ENCODE measurements at regions of chr17 and their contacts with region 1.

Region 1: DNA sequence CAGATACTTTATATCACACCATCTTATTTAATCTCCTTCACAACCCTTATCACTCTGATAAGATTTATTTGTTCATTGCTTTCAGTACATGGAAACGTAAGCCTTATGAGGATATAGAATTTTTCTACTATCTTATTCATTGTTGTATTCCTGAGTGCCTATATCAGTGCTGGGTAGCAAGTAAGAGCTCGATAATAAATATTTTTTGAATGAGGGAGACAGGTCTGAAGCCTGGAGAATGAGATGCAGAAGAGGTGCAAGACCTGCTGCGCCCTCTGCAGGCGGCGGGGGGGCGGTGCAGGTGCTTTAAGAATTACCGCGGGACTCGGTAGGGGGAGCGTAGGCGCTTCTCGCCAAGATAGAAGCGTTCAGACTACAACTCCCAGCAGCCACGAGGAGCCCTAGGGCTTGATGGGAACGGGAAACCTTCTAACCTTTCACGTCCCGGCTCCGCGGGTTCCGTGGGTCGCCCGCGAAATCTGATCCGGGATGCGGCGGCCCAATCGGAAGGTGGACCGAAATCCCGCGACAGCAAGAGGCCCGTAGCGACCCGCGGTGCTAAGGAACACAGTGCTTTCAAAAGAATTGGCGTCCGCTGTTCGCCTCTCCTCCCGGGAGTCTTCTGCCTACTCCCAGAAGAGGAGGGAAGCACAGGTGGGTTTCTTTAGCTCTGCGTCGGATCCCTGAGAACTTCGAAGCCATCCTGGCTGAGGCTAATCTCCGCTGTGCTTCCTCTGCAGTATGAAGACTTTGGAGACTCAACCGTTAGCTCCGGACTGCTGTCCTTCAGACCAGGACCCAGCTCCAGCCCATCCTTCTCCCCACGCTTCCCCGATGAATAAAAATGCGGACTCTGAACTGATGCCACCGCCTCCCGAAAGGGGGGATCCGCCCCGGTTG is at the start of gene WRAP53:
- DNase-seq: peak; percentile 92 to 98 (median 95)
- ATAC-seq: peak; percentile 79
- H3K4me3 Mint-ChIP-seq: peak within 1 kb of the TSS; percentile 87 to 99 (median 98)
- H3K27ac Mint-ChIP-seq: peak within 1 kb of the TSS; percentile 99 to 100 (median 100)
- H3K4me1 Mint-ChIP-seq: peaks cover 25 to 51% (median 50%) of the 10 kb centered on the region in 4 donors
- H3K27me3 Mint-ChIP-seq: peaks cover 0 to 3% (median 0%) of the 10 kb centered on the region in 5 donors
- polyA plus RNA-seq, gene WRAP53: 10.5 to 14.1 (median 13.9) TPM

Region 2: DNA sequence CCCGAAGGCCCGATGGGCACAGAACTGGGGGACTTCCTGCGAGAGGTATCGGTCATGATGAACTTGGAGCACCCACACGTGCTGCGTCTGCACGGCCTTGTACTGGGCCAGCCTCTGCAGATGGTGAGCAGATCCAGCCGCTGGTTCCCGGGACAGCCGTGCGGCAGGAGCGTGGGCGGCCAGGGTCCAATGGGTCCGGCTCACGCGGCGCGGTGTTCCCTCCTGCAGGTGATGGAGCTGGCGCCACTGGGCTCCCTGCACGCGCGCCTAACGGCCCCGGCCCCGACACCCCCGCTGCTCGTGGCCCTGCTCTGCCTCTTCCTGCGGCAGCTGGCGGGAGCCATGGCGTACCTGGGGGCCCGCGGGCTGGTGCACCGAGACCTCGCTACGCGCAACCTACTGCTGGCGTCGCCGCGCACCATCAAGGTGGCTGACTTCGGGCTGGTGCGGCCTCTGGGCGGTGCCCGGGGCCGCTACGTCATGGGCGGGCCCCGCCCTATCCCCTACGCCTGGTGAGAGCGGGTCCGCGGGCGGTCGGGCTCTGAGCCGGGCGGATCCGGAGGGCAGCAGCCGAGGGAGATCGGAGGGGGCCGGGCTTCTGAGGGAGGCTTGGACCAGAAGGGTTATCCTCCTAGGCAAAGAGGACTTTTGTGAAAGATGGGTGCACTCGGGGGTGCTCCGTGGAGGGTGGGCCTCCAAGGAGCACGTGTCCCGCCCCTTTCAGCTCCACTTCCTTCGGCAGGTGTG is 304.2 kb before region 1 on chr17:
- POLR2A ChIA-PET with region 1: interaction called, 15 read pairs
- DNase-seq: peak; percentile 65 to 93 (median 82)
- ATAC-seq: peak; percentile 95
- H3K4me3 Mint-ChIP-seq: peak overlapping the region; percentile 77 to 94 (median 86)
- H3K27ac Mint-ChIP-seq: peak overlapping the region; percentile 48 to 97 (median 96)
- H3K4me1 Mint-ChIP-seq: peaks cover 15 to 42% (median 24%) of the 10 kb centered on the region in 4 donors
- H3K27me3 Mint-ChIP-seq: peaks cover 14 to 33% (median 29%) of the 10 kb centered on the region in 5 donors

Region 3: GRCh38 chr17:7548585-7549400 is 139.4 kb before region 1 on chr17 and contains the start of gene TNFSF12:
- POLR2A ChIA-PET with region 1: interaction called, 21 read pairs
- DNase-seq: peak in 8 of 10 donors; percentile 34 to 79 (median 52)
- ATAC-seq: peak; percentile 33 to 71
- H3K4me3 Mint-ChIP-seq: peak within 1 kb of the TSS; percentile 72 to 92 (median 88)
- H3K27ac Mint-ChIP-seq: peak within 1 kb of the TSS; percentile 66 to 96 (median 94)
- H3K4me1 Mint-ChIP-seq: peaks cover 28 to 57% (median 54%) of the 10 kb centered on the region in 4 donors
- H3K27me3 Mint-ChIP-seq: no peaks in the 10 kb centered on the region
- polyA plus RNA-seq, gene TNFSF12: 19.3 to 28.6 (median 25.8) TPM

Region 4: DNA sequence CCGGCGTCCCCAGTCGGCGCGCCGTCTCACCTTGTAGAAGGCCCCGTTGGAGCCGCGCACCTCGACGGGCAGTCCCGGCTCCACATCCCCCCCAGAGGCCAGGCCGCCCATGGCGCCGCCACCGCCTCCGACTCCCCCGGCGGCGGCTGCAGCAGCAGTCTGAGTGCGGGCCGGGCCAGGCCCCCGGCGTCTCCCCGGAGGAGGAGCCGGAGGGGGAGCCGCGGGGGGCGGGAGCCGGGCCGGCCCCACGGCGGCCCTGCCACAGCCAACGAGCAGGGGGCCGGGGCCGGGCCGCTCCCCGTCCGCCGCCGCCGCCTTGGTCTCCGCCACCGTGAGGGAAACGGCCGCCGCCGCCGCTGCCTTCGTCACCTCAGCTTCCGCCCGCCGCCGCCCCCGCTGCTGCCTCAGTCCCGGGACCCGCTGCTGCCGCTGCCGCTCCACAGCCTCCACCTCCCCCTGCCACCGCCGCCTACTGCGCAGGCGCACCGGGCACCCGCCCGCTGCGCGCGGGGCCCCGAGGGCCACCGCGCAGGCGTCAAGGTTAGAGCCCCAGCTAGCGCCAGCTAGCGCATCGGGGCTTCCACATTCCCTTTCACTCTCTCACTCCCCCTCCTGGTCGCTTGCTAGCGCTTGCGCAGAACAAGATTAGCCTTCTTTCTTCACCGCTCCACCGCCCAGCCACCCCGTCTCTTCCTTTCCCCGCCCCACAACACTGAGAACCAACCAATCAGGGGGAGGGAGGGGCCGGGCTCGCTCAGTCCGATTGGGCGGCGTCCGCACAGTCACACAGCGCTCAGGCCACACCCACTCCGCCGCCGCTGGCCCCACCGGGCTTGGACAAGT is 73.5 kb before region 1 on chr17 and contains the start of gene FXR2:
- POLR2A ChIA-PET with region 1: interaction called, 105 read pairs
- DNase-seq: peak; percentile 96 to 100 (median 98)
- ATAC-seq: peak; percentile 83 to 85
- H3K4me3 Mint-ChIP-seq: peak within 1 kb of the TSS; percentile 85 to 97 (median 92)
- H3K27ac Mint-ChIP-seq: peak within 1 kb of the TSS; percentile 82 to 99 (median 97)
- H3K4me1 Mint-ChIP-seq: peaks cover 20 to 41% (median 37%) of the 10 kb centered on the region in 4 donors
- H3K27me3 Mint-ChIP-seq: no peaks in the 10 kb centered on the region
- polyA plus RNA-seq, gene FXR2: 11.8 to 17.8 (median 12.4) TPM

Region 5: DNA sequence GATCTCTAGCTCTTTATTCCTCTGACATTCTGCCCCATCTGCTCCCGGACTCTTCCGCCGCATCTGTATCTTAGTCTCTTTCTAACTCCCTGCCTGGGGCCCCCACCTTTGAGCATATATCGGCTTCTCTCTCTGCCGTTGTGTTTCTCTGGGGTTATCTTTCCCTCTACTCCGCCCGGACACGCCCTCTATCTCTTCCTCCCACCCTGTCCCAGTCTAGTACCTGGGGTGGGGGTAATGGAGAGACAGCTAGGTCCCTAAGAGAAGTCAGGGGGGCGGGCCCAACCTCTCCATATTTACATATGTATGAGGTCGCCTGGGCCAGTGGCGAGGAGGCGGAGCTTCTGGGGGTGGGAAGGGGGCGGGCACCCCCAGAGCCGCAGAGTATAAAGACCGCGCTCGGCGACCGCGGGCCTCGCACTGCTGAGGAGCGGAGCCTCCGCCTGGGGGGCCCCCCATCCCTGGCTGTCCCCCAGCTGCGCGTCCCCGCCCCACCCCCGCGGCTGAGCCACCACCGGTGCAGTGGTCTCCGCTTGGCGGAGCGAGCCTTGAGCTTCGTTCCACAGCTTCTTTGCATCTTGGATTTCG is 37.6 kb before region 1 on chr17 and contains the start of gene ATP1B2:
- POLR2A ChIA-PET with region 1: interaction called, 69 read pairs
- DNase-seq: peak; percentile 57 to 91 (median 74)
- ATAC-seq: peak; percentile 90 to 91
- H3K4me3 Mint-ChIP-seq: peak within 1 kb of the TSS; percentile 80 to 98 (median 90)
- H3K27ac Mint-ChIP-seq: peak within 1 kb of the TSS in 9 of 10 donors; percentile 4 to 84 (median 72)
- H3K4me1 Mint-ChIP-seq: peaks cover 16 to 22% (median 19%) of the 10 kb centered on the region in 4 donors
- H3K27me3 Mint-ChIP-seq: peaks cover 3 to 27% (median 8%) of the 10 kb centered on the region in 5 donors
- polyA plus RNA-seq, gene ATP1B2: 0.17 to 0.57 TPM in 2 of 3 donors, not detected in the other

Region 6: DNA sequence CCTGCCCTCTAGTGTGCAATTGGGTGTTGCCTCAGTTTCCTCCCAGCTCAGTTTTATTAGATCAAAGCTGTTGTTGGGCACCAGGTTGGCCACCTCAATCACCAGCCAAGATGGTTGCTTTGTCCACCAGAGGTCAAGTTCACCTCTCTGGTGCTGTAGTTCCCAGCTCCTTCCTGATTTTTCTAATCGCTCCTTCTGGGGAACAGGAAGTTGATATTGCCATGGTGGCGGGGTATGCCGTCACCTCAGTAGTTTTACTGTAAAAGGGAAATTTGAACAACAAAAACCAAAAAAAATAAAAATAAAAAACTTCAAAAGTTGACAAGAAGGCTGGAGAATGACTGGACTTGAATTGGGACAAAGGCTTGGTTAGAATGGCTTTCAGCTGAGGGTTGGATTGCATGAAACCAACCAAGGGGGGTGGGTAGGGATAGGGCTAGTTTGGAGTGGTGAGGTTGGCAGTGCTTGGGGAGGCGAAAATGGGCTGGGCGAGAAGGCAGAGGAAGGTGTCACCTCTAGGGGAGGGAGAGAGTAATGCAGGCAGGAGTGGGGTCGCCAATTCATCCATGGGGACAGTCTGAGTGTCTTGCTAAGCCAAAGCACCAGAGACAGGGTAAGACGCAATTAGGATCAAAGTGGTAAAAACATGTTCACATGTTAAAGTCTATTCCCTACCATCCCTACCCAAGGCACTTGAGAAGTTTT is 23.0 kb after region 1 on chr17:
- POLR2A ChIA-PET with region 1: no interaction called
- DNase-seq: no peak
- ATAC-seq: peak in 1 of 2 donors; percentile 34
- H3K4me3 Mint-ChIP-seq: peak overlapping the region in 1 of 10 donors; percentile 9
- H3K27ac Mint-ChIP-seq: peak overlapping the region in 2 of 10 donors; percentile 49 to 79
- H3K4me1 Mint-ChIP-seq: peaks cover 15 to 29% (median 19%) of the 10 kb centered on the region in 4 donors
- H3K27me3 Mint-ChIP-seq: peaks cover 25 to 91% (median 60%) of the 10 kb centered on the region in 5 donors

Region 7: DNA sequence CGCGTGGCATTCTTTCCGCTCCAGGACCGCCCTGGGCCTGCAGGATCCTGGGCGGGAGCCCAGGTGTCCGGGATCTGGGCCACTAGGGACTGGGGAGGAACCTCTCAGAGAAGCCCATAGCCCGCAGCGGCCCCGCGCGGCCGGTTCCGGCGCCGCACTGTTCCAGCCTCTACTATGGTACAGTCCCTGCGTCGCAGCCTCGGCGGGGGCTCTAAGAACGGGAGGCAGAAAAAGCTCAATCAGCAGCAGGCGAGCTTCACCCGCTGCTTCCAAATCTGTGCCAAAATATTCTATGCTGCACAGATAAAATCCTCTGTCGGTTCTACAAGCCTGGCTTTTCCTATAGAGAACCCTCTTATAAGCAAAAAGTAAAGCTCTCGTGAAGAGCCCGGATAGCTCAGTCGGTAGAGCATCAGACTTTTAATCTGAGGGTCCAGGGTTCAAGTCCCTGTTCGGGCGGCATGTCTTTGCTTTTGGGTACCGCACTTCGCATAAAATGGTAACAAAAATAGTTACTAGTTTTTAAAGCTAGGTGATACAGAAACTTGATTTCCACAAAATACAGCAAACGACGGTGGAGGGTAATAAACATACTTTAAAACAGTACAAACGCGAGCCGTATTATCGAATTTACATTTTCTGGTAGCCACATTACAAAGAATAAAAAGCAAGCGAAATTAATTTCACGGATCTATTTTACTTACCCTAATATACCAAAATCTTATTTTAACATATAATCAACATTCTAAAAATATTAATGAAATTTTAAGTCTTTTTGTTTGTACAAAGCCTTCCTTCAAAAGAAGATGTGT is 430.8 kb after region 1 on chr17:
- POLR2A ChIA-PET with region 1: interaction called, 12 read pairs
- DNase-seq: peak; percentile 78 to 98 (median 85)
- ATAC-seq: peak; percentile 64 to 71
- H3K4me3 Mint-ChIP-seq: peak overlapping the region; percentile 92 to 98 (median 94)
- H3K27ac Mint-ChIP-seq: peak overlapping the region; percentile 91 to 100 (median 97)
- H3K4me1 Mint-ChIP-seq: peaks cover 46 to 61% (median 56%) of the 10 kb centered on the region in 4 donors
- H3K27me3 Mint-ChIP-seq: peaks cover 15 to 55% (median 38%) of the 10 kb centered on the region in 5 donors